PC-3 (cell line): ENCODE measurements at regions of chr5 and their contacts with region 1.

Region 1: DNA sequence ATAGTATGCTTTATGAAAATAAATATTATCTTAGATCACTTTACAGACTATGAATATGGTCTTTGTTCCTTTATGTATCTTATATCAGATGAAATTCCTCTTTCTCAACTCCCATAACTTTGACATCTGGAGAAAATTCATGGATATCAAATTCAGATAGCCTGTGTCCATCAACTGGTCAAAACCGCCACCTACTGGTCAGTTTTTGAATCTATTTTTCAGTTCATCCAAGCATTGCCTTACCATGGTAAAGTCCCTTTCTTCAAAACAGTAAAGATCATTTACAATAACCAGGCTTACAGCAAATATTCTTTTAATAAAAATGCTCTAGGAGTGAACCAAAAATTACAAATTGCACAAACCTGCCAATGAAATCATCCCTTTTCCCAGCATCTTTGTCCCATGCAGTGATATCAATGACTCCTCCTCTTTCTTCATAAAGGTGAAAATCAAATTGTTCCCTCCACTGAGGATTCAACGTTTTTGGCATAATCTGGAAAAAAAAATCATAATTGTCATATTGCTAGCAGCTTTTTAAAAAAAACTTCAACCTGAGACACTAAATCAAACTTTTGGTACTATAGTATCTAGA is 290.5 kb downstream of the SLF1 start:
- DNase-seq: peak; percentile 69
- ATAC-seq: peak; percentile 51; the same call in 1 of the 2 replicates
- H3K4me3 ChIP-seq: no peak overlapping the region
- H3K27ac ChIP-seq: no peak overlapping the region
- H3K4me1 ChIP-seq: no peaks in the 10 kb centered on the region
- H3K27me3 ChIP-seq: no peaks in the 10 kb centered on the region
- CTCF ChIP-seq: peak; percentile 72

Region 2: GRCh38 chr5:94802450-94802849 is 106.5 kb before region 1 on chr5:
- CTCF ChIA-PET with region 1: no interaction called
- POLR2A ChIA-PET with region 1: no interaction called
- intact Hi-C with region 1: no loop called
- DNase-seq: peak; percentile 3
- ATAC-seq: no peak
- H3K4me3 ChIP-seq: no peak overlapping the region
- H3K27ac ChIP-seq: no peak overlapping the region
- H3K4me1 ChIP-seq: no peaks in the 10 kb centered on the region
- H3K27me3 ChIP-seq: no peaks in the 10 kb centered on the region
- CTCF ChIP-seq: no peak

Region 3: DNA sequence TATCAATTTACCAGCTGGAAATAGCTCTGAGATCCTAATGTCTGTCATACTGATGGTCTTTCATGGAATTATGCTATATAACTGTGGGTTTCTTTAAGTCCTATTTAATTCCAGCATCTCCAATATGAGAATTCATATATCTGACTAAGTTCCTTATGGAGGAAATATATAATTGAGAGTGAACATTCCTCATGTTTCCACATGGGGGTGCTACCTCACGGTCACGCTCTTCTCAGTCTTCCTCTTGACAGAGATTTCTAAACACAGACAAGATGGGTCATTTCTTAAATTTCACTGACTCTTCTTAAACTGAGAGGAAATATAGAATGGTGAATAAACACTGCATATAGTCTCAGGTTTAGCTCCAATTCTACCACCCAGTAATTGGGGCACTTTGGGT is 78.5 kb before region 1 on chr5:
- CTCF ChIA-PET with region 1: no interaction called
- POLR2A ChIA-PET with region 1: no interaction called
- intact Hi-C with region 1: loop called (anchors 1 kb)
- DNase-seq: peak; percentile 36
- ATAC-seq: no peak
- H3K4me3 ChIP-seq: no peak overlapping the region
- H3K27ac ChIP-seq: no peak overlapping the region
- H3K4me1 ChIP-seq: no peaks in the 10 kb centered on the region
- H3K27me3 ChIP-seq: no peaks in the 10 kb centered on the region
- CTCF ChIP-seq: peak; percentile 61

Region 4: GRCh38 chr5:94890907-94891306 is 18.1 kb before region 1 on chr5:
- CTCF ChIA-PET with region 1: no interaction called
- POLR2A ChIA-PET with region 1: no interaction called
- intact Hi-C with region 1: loop called (anchors 2 kb)
- DNase-seq: peak; percentile 37
- ATAC-seq: peak; percentile 51
- H3K4me3 ChIP-seq: no peak overlapping the region
- H3K27ac ChIP-seq: no peak overlapping the region
- H3K4me1 ChIP-seq: peaks cover 8% of the 10 kb centered on the region; the same call in 1 of the 2 replicates
- H3K27me3 ChIP-seq: no peaks in the 10 kb centered on the region
- CTCF ChIP-seq: no peak